ENCODE measurements at regions of chr10 and their contacts with region 1.

Region 1: GRCh38 chr10:123323884-123324283 is 169.7 kb downstream of the BUB3 start:
- DNase-seq: no peak
- H3K4me3 Mint-ChIP-seq: no peak overlapping the region
- H3K27ac Mint-ChIP-seq: no peak overlapping the region
- H3K4me1 Mint-ChIP-seq: peaks cover 11% of the 10 kb centered on the region
- H3K27me3 Mint-ChIP-seq: peaks cover 2% of the 10 kb centered on the region

Region 2: DNA sequence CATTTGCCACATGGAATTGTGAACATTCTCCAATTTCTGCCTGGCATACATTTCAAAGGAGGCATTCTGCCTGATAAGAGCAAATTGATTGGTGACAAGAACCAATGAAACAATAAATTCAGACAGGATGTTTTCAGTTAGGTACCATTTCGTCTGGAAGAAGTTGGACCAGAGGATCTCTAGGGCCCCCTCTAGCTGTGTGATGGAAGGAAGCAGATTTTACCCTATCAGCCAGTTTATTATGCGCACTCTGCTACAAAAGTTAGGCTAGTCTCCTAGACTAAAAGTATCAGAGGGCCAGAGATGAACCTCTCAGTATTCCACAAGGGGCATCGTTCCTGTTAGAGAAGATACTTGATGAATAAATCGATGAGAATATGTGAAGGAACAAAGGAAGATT is 51.7 kb before region 1 on chr10:
- intact Hi-C with region 1: no loop called
- DNase-seq: no peak
- H3K4me3 Mint-ChIP-seq: no peak overlapping the region
- H3K27ac Mint-ChIP-seq: no peak overlapping the region
- H3K4me1 Mint-ChIP-seq: no peaks in the 10 kb centered on the region
- H3K27me3 Mint-ChIP-seq: peaks cover 23% of the 10 kb centered on the region

Region 3: DNA sequence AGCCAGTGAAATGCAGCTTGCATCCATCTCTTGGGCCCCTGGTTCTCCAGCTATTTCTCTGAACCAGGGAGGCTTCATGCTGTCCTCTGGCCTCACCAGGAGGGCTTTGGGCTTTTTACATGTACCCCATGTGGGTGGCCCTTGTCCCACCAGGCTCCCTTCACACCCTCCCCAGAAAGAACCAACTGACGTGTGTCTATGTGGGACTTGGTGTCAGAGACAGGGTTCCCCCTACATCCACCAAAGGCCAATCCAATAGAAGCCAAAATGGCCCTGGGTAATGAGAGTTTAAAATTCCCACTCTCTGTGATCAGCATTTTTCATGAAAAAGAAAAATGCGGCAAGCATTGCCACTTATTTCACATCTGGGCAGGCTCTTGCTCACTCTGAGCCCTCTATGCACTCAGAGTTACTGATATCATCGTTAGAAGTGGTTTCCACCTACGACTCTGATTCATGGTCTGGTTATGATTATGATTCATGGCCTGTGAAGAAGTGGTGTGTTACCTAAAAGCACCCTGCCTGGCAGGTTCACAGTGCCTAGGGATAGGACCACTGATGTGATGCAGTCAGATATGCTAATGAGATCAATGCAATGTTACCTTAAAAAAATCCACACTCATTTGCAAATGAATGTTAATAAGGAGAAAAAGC is 36.2 kb before region 1 on chr10:
- intact Hi-C with region 1: loop called (anchors 5 kb)
- DNase-seq: peak; percentile 9
- H3K4me3 Mint-ChIP-seq: no peak overlapping the region
- H3K27ac Mint-ChIP-seq: no peak overlapping the region
- H3K4me1 Mint-ChIP-seq: peaks cover 15% of the 10 kb centered on the region
- H3K27me3 Mint-ChIP-seq: peaks cover 11% of the 10 kb centered on the region

Region 4: GRCh38 chr10:123559066-123559822 is 235.4 kb after region 1 on chr10:
- intact Hi-C with region 1: no loop called
- DNase-seq: peak; percentile 35
- H3K4me3 Mint-ChIP-seq: no peak overlapping the region
- H3K27ac Mint-ChIP-seq: no peak overlapping the region
- H3K4me1 Mint-ChIP-seq: no peaks in the 10 kb centered on the region
- H3K27me3 Mint-ChIP-seq: peaks cover 1% of the 10 kb centered on the region

Region 5: DNA sequence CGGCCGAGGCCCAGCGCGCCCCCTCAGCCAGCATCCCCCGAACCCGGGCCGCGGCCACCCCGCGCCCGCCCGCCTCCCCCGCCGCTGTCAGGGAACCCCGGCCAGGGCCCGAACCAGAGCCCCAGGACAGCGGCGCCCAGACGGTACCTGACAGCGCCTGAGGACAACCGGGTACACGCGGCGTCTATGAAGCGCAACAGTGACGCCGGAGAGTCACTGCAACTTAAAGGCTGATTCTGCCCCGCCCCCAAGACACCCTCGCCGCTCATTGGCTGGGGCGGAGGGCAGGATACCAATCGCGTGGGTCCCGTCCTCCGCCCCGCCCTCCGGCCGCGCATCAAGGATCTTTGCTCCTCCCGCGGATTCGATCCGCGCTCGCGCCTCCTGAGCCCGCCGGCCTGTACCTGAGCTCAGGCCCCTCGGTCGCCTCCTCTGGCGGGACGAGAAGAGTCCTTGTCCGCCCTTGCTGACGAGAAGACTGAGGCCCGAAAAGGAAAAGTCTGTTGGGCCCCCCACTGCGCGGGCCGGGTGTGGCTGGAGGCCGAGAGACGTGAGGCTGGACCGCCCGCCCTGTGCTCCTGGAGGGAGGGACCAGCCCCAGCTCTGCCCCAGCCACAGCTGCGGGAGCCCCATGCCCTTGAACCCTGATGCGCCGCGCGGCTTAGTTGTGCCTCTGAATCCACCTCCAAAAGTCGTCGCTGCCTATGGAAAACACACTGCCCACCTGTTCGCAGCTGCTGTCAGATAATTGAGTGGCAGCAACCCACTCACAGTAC is 1095.0 kb after region 1 on chr10 and contains the start of gene OAT:
- intact Hi-C with region 1: no loop called
- DNase-seq: peak; percentile 93
- H3K4me3 Mint-ChIP-seq: peak within 1 kb of the TSS; percentile 81
- H3K27ac Mint-ChIP-seq: no peak within 1 kb of the TSS
- H3K4me1 Mint-ChIP-seq: peaks cover 8% of the 10 kb centered on the region
- H3K27me3 Mint-ChIP-seq: peaks cover 10% of the 10 kb centered on the region
- total RNA-seq, gene OAT: 42.6 and 45.8 TPM in 2 replicates